ENCODE measurements at regions of chr9 and their contacts with region 1.

Region 1: DNA sequence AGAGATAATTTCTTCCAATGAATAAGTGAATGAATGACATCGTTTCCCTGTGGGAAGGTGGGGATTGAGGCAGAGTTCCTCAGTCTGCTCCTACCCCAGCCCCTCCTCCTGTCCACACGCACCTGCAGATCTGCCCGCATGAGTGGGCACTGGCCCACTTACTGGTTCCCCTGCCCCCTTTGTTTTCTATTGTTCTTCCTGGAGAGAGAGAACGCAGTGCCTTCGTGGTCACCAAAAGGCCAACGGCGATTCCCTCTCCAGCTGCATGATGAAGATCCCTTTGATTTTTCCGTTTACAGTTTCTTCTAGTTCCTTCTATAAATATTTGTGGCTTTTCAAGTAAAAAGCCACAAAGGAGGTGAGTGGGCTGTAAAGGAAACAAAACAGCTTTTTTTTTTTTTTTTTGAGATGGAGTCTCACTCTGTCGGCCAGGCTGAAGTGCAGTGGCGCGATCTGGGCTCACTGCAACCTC is 5.7 kb upstream of the FPGS start:
- DNase-seq: no peak
- ATAC-seq: no peak
- H3K4me3 Mint-ChIP-seq: no peak overlapping the region
- H3K27ac Mint-ChIP-seq: no peak overlapping the region
- H3K4me1 Mint-ChIP-seq: peaks cover 8% of the 10 kb centered on the region
- H3K27me3 Mint-ChIP-seq: no peaks in the 10 kb centered on the region
- CTCF ChIP-seq: no peak

Region 2: DNA sequence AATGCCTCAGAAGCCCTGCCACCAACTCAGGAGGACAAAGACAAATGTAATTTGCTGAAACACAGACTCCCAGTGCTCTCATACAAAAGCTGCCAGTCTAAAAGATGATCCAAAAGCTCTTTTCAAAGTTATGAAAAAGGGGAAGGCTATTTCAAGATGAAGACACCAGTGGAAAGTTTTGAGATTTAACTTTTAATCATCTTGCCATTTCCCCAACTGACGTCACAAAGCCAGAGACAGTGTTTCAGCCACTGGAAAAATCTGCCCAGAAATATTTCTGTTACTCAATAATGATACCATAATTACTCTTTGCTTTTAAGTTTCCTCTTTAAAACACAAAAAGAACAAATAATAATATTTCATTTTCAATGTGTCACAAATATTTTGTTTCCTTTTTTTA is 36.6 kb after region 1 on chr9:
- CTCF ChIA-PET with region 1: interaction called, 3 read pairs
- POLR2A ChIA-PET with region 1: interaction called, 10 read pairs
- DNase-seq: no peak
- ATAC-seq: no peak
- H3K4me3 Mint-ChIP-seq: no peak overlapping the region
- H3K27ac Mint-ChIP-seq: no peak overlapping the region
- H3K4me1 Mint-ChIP-seq: peaks cover 10% of the 10 kb centered on the region
- H3K27me3 Mint-ChIP-seq: peaks cover 2% of the 10 kb centered on the region; the same call in 1 of the 2 replicates
- CTCF ChIP-seq: no peak